Activated CD4-positive, alpha-beta T cell treated with anti-CD3 and anti-CD28 coated beads for 36 hours (primary cell): ENCODE measurements at regions of chr11 and their contacts with region 1.

Region 1: GRCh38 chr11:18012863-18013781 is at the start of gene SERGEF:
- DNase-seq: peak; percentile 96
- ATAC-seq: peak; percentile 93
- H3K4me3 Mint-ChIP-seq: peak within 1 kb of the TSS; percentile 85
- H3K27ac Mint-ChIP-seq: peak within 1 kb of the TSS; percentile 98
- H3K4me1 Mint-ChIP-seq: peaks cover 39% of the 10 kb centered on the region
- H3K27me3 Mint-ChIP-seq: no peaks in the 10 kb centered on the region
- total RNA-seq, gene SERGEF: 47.5 to 57.5 TPM

Region 2: DNA sequence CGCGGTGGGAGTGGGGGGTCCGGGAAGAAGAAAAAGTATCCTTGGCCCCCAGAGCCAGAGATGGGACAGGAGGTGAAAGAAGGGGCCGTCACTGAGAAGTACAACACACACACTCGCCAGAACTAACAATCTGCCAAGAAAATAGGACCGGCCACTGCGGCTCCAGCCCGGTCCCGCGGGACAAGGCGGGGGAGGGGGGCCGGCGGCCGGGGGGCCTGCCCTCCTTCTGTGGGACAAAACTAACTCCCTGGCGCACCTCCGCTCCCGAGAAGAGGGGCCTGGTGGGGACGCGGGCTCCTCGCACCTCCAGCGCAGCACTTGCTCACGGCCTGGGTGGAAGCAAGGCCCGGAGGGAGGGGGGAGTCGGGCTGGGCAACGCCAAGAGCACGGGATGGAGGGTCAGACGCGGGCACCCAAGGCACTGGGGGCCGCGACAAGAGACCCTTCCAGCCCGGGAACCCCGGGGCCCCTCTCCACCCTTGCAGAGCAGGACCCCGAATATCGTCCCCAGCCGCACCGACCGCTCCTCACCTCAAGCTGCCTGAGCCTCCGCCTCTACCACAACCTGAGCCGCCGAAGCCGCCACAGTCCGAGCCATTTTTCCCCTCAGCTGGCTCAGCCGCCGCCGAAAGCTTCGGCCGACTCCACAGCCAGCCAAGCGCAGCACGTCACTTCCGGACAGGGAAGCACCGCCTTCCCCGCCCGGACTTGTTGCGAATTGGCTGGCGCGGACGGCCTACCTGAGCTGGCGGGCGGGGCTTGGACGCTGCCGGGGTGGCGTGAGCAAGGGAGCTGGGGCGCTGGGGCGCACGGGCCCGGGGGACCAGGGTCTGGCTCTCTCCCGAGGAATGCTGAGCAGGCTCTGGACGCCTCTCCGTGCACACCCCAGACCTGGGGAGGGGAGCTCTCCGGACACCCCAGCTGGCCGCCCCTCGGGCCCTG is 805.5 kb before region 1 on chr11 and contains the start of gene PIK3C2A:
- CTCF ChIA-PET with region 1: no interaction called
- POLR2A ChIA-PET with region 1: no interaction called
- intact Hi-C with region 1: loop called in 1 of 2 experiments (anchors 5 kb)
- DNase-seq: peak; percentile 97
- ATAC-seq: peak; percentile 97
- H3K4me3 Mint-ChIP-seq: peak within 1 kb of the TSS; percentile 91
- H3K27ac Mint-ChIP-seq: peak within 1 kb of the TSS; percentile 97
- H3K4me1 Mint-ChIP-seq: peaks cover 40% of the 10 kb centered on the region
- H3K27me3 Mint-ChIP-seq: no peaks in the 10 kb centered on the region
- total RNA-seq, gene PIK3C2A: 23.3 to 27.3 TPM

Region 3: GRCh38 chr11:17298302-17298701 is 714.8 kb before region 1 on chr11:
- CTCF ChIA-PET with region 1: no interaction called
- POLR2A ChIA-PET with region 1: no interaction called
- intact Hi-C with region 1: loop called in 1 of 2 experiments (anchors 5 kb)
- DNase-seq: peak; percentile 83
- ATAC-seq: peak; percentile 82
- H3K4me3 Mint-ChIP-seq: no peak overlapping the region
- H3K27ac Mint-ChIP-seq: no peak overlapping the region
- H3K4me1 Mint-ChIP-seq: peaks cover 40% of the 10 kb centered on the region
- H3K27me3 Mint-ChIP-seq: no peaks in the 10 kb centered on the region

Region 4: DNA sequence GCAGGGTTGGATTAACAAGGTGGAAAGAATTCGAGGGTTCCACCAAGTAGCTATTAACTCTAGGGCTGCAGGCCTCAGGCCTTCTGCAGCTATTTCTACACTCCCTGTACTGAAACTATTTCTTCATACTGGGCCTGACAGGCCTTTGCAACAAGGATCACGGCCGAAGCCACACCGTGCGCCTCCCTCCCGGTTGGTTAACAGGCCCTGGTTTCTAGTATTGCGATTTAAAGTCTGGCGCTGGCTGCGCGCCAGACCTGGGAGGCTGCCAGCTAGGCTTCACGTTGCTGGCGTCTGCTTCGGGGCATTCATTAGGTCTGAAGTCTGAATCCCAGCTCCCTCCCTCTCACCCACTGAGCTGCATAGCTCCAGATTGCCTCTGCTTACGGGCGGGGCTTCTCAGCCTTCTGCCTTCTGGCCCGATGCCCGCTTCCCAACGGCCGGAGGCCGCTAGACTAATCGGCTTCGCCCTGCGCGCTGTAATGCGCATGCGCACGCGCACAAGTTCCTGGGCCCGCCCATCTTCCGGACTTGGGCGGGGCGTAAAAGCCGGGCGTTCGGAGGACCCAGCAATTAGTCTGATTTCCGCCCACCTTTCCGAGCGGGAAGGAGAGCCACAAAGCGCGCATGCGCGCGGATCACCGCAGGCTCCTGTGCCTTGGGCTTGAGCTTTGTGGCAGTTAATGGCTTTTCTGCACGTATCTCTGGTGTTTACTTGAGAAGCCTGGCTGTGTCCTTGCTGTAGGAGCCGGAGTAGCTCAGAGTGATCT is 382.8 kb after region 1 on chr11:
- CTCF ChIA-PET with region 1: no interaction called
- POLR2A ChIA-PET with region 1: no interaction called
- intact Hi-C with region 1: loop called in 1 of 2 experiments (anchors 1 kb)
- DNase-seq: peak; percentile 96
- ATAC-seq: peak; percentile 65
- H3K4me3 Mint-ChIP-seq: peak overlapping the region; percentile 97
- H3K27ac Mint-ChIP-seq: peak overlapping the region; percentile 99
- H3K4me1 Mint-ChIP-seq: peaks cover 65% of the 10 kb centered on the region
- H3K27me3 Mint-ChIP-seq: no peaks in the 10 kb centered on the region